ENCODE measurements at regions of chr17 and their contacts with region 1.

Region 1: GRCh38 chr17:32486111-32486700 is 587 bp upstream of the CDK5R1 start:
- DNase-seq: peak; percentile 55 to 82 (median 76)
- ATAC-seq: peak; percentile 87
- H3K4me3 ChIP-seq: no peak overlapping the region
- H3K4me3 Mint-ChIP-seq: peak overlapping the region; percentile 62 to 87 (median 80)
- H3K27ac ChIP-seq: peak overlapping the region; percentile 45
- H3K27ac Mint-ChIP-seq: peak overlapping the region in 8 of 9 donors; percentile 30 to 89 (median 84)
- H3K4me1 ChIP-seq: peaks cover 15 to 35% of the 10 kb centered on the region in 2 donors
- H3K4me1 Mint-ChIP-seq: peaks cover 15 to 53% (median 43%) of the 10 kb centered on the region in 7 donors
- H3K27me3 ChIP-seq: no peaks in the 10 kb centered on the region
- H3K27me3 Mint-ChIP-seq: no peaks in the 10 kb centered on the region

Region 2: DNA sequence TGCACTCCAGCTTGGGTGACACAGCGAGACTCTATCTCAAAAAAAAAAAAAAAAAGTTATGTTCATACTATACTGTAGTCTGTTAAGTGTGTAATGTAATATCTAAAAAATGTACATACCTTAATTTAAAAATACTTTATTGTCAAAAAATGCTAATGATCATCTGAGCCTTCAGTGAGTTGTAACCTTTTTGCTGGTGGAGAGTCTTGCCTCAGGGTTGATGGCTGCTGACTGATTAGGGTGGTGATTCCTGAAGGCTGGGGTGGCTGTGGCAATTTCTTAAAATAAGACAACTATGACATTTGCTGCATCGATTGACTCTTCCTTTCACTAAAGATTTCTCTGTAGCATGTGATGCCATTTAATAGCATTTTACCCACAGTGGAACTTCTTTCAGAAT is 320.1 kb before region 1 on chr17:
- CTCF ChIA-PET with region 1: no interaction called
- POLR2A ChIA-PET with region 1: no interaction called
- intact Hi-C with region 1: no loop called
- DNase-seq: no peak
- ATAC-seq: no peak
- H3K4me3 ChIP-seq: no peak overlapping the region
- H3K4me3 Mint-ChIP-seq: no peak overlapping the region
- H3K27ac ChIP-seq: no peak overlapping the region
- H3K27ac Mint-ChIP-seq: no peak overlapping the region
- H3K4me1 ChIP-seq: no peaks in the 10 kb centered on the region
- H3K4me1 Mint-ChIP-seq: peaks cover 0 to 5% (median 0%) of the 10 kb centered on the region in 7 donors
- H3K27me3 ChIP-seq: no peaks in the 10 kb centered on the region
- H3K27me3 Mint-ChIP-seq: no peaks in the 10 kb centered on the region

Region 3: GRCh38 chr17:32283745-32284201 is 202.4 kb before region 1 on chr17:
- CTCF ChIA-PET with region 1: no interaction called
- POLR2A ChIA-PET with region 1: no interaction called
- intact Hi-C with region 1: no loop called
- DNase-seq: no peak
- ATAC-seq: no peak
- H3K4me3 ChIP-seq: no peak overlapping the region
- H3K4me3 Mint-ChIP-seq: no peak overlapping the region
- H3K27ac ChIP-seq: no peak overlapping the region
- H3K27ac Mint-ChIP-seq: peak overlapping the region in 1 of 9 donors; percentile 70
- H3K4me1 ChIP-seq: no peaks in the 10 kb centered on the region
- H3K4me1 Mint-ChIP-seq: peaks cover 0 to 2% (median 0%) of the 10 kb centered on the region in 7 donors
- H3K27me3 ChIP-seq: no peaks in the 10 kb centered on the region
- H3K27me3 Mint-ChIP-seq: peaks cover 5 to 24% (median 10%) of the 10 kb centered on the region in 5 donors

Region 4: GRCh38 chr17:32444308-32445073 is 41.7 kb before region 1 on chr17 and contains the start of gene PSMD11:
- CTCF ChIA-PET with region 1: no interaction called
- POLR2A ChIA-PET with region 1: interaction called, 9 read pairs
- intact Hi-C with region 1: loop called in 1 of 2 experiments (anchors 1 kb)
- DNase-seq: peak; percentile 98 to 100 (median 99)
- ATAC-seq: peak; percentile 99
- H3K4me3 ChIP-seq: peak within 1 kb of the TSS; percentile 80
- H3K4me3 Mint-ChIP-seq: peak within 1 kb of the TSS; percentile 78 to 93 (median 86)
- H3K27ac ChIP-seq: peak within 1 kb of the TSS; percentile 94
- H3K27ac Mint-ChIP-seq: peak within 1 kb of the TSS; percentile 52 to 83 (median 78)
- H3K4me1 ChIP-seq: peaks cover 13 to 14% of the 10 kb centered on the region in 2 donors
- H3K4me1 Mint-ChIP-seq: peaks cover 25 to 46% (median 36%) of the 10 kb centered on the region in 7 donors
- H3K27me3 ChIP-seq: no peaks in the 10 kb centered on the region
- H3K27me3 Mint-ChIP-seq: peaks cover 0 to 23% (median 0%) of the 10 kb centered on the region in 5 donors
- total RNA-seq, gene PSMD11: 60.1 to 112 (median 67.5) TPM

Region 5: GRCh38 chr17:32470405-32471167 is 15.6 kb before region 1 on chr17:
- CTCF ChIA-PET with region 1: interaction called, 10 read pairs
- POLR2A ChIA-PET with region 1: interaction called, 6 read pairs
- intact Hi-C with region 1: no loop called
- DNase-seq: no peak
- ATAC-seq: no peak
- H3K4me3 ChIP-seq: no peak overlapping the region
- H3K4me3 Mint-ChIP-seq: no peak overlapping the region
- H3K27ac ChIP-seq: no peak overlapping the region
- H3K27ac Mint-ChIP-seq: no peak overlapping the region
- H3K4me1 ChIP-seq: no peaks in the 10 kb centered on the region
- H3K4me1 Mint-ChIP-seq: peaks cover 2 to 33% (median 17%) of the 10 kb centered on the region in 7 donors
- H3K27me3 ChIP-seq: no peaks in the 10 kb centered on the region
- H3K27me3 Mint-ChIP-seq: no peaks in the 10 kb centered on the region

Region 6: GRCh38 chr17:32519228-32520103 is 33.3 kb after region 1 on chr17:
- CTCF ChIA-PET with region 1: interaction called, 76 read pairs
- POLR2A ChIA-PET with region 1: interaction called, 382 read pairs
- intact Hi-C with region 1: loop called (anchors 1 kb)
- DNase-seq: peak; percentile 23 to 73 (median 46)
- ATAC-seq: peak; percentile 64
- H3K4me3 ChIP-seq: peak overlapping the region; percentile 50
- H3K4me3 Mint-ChIP-seq: peak overlapping the region; percentile 76 to 96 (median 88)
- H3K27ac ChIP-seq: peak overlapping the region; percentile 60
- H3K27ac Mint-ChIP-seq: peak overlapping the region; percentile 88 to 99 (median 93)
- H3K4me1 ChIP-seq: peaks cover 53 to 66% of the 10 kb centered on the region in 2 donors
- H3K4me1 Mint-ChIP-seq: peaks cover 40 to 83% (median 78%) of the 10 kb centered on the region in 7 donors
- H3K27me3 ChIP-seq: no peaks in the 10 kb centered on the region
- H3K27me3 Mint-ChIP-seq: no peaks in the 10 kb centered on the region

Region 7: GRCh38 chr17:32558997-32559650 is 72.9 kb after region 1 on chr17:
- CTCF ChIA-PET with region 1: interaction called, 9 read pairs
- POLR2A ChIA-PET with region 1: interaction called, 4 read pairs
- intact Hi-C with region 1: loop called (anchors 2 to 10 kb)
- DNase-seq: no peak
- ATAC-seq: peak; percentile 46
- H3K4me3 ChIP-seq: no peak overlapping the region
- H3K4me3 Mint-ChIP-seq: peak overlapping the region in 5 of 10 donors; percentile 65 to 84 (median 69)
- H3K27ac ChIP-seq: no peak overlapping the region
- H3K27ac Mint-ChIP-seq: peak overlapping the region in 6 of 9 donors; percentile 16 to 86 (median 66)
- H3K4me1 ChIP-seq: peaks cover 7% of the 10 kb centered on the region in 2 donors
- H3K4me1 Mint-ChIP-seq: peaks cover 0 to 38% (median 34%) of the 10 kb centered on the region in 7 donors
- H3K27me3 ChIP-seq: no peaks in the 10 kb centered on the region
- H3K27me3 Mint-ChIP-seq: no peaks in the 10 kb centered on the region

Region 8: GRCh38 chr17:32659419-32659842 is 173.2 kb after region 1 on chr17:
- CTCF ChIA-PET with region 1: interaction called, 6 read pairs
- POLR2A ChIA-PET with region 1: no interaction called
- intact Hi-C with region 1: loop called in 1 of 2 experiments (anchors 1 kb)
- DNase-seq: peak; percentile 21 to 64 (median 49)
- ATAC-seq: peak; percentile 81
- H3K4me3 ChIP-seq: no peak overlapping the region
- H3K4me3 Mint-ChIP-seq: no peak overlapping the region
- H3K27ac ChIP-seq: no peak overlapping the region
- H3K27ac Mint-ChIP-seq: no peak overlapping the region
- H3K4me1 ChIP-seq: no peaks in the 10 kb centered on the region
- H3K4me1 Mint-ChIP-seq: peaks cover 0 to 4% (median 0%) of the 10 kb centered on the region in 7 donors
- H3K27me3 ChIP-seq: no peaks in the 10 kb centered on the region
- H3K27me3 Mint-ChIP-seq: peaks cover 0 to 2% (median 0%) of the 10 kb centered on the region in 5 donors

Region 9: GRCh38 chr17:32684087-32684958 is 198.1 kb after region 1 on chr17:
- CTCF ChIA-PET with region 1: no interaction called
- POLR2A ChIA-PET with region 1: no interaction called
- intact Hi-C with region 1: no loop called
- DNase-seq: no peak
- ATAC-seq: no peak
- H3K4me3 ChIP-seq: no peak overlapping the region
- H3K4me3 Mint-ChIP-seq: no peak overlapping the region
- H3K27ac ChIP-seq: no peak overlapping the region
- H3K27ac Mint-ChIP-seq: no peak overlapping the region
- H3K4me1 ChIP-seq: no peaks in the 10 kb centered on the region
- H3K4me1 Mint-ChIP-seq: no peaks in the 10 kb centered on the region
- H3K27me3 ChIP-seq: no peaks in the 10 kb centered on the region
- H3K27me3 Mint-ChIP-seq: peaks cover 0 to 7% (median 5%) of the 10 kb centered on the region in 5 donors

Region 10: DNA sequence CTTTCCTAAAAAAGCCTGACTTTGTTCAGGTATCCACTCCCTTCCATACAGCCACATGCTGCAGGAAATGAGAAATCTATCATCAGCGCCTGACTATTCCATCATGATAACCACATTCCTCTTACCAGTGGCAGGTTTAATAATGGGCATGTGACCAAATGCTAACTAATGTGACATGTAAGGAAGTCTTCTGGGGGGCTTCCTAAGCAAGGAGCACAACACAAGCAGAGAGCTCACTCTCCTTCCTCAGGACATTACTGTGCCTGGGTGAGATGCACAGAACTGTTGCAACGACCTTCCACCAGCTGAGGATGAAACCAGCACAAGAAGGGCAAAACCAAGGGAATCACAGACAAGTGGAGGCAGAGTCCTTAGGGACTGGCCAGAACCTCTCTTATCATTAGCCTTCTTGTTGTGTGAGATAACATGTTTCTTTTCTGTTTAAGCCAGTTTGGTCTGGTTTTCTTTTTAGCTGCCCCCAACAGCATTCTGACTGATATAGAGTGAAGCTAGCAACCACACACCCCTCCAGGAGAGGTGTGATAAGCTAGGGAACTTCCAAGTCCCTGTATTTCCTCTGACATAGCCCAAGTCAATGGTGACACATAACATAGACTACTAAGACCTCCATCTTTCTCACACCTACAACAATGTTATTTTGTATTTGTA is 373.8 kb after region 1 on chr17:
- CTCF ChIA-PET with region 1: no interaction called
- POLR2A ChIA-PET with region 1: no interaction called
- intact Hi-C with region 1: no loop called
- DNase-seq: no peak
- ATAC-seq: peak; percentile 26
- H3K4me3 ChIP-seq: no peak overlapping the region
- H3K4me3 Mint-ChIP-seq: no peak overlapping the region
- H3K27ac ChIP-seq: no peak overlapping the region
- H3K27ac Mint-ChIP-seq: no peak overlapping the region
- H3K4me1 ChIP-seq: no peaks in the 10 kb centered on the region
- H3K4me1 Mint-ChIP-seq: peaks cover 0 to 2% (median 0%) of the 10 kb centered on the region in 7 donors
- H3K27me3 ChIP-seq: no peaks in the 10 kb centered on the region
- H3K27me3 Mint-ChIP-seq: peaks cover 4 to 16% (median 6%) of the 10 kb centered on the region in 5 donors

Region 11: DNA sequence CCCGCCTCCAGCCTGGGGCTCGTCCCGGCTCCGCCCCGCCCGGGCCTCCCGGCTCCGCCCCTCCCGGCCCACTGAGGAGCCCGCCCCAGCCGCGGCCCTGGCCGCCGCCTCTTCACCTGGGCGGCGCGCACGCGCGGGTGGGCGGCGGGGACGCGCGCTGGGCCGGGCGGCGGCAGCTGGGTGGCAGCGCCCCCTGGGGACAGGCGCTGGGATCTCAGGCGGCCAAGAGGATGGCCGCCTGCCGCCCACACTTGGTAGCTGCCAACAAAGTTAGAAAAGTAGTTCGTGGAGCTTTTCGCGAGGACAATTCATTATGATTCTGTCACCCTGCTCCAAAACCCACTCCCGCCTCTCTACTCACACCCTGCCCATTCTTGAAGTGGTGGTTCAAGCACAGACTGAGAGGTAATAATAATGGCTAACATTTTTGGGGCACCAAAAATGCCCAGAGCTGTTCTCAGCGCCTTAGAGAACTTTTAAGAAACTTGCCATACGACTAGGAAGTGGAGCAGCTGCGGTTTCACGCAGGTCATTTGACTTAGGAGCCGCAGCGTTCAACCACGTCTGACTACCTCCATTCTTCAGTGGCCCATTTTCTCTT is 391.1 kb after region 1 on chr17:
- CTCF ChIA-PET with region 1: no interaction called
- POLR2A ChIA-PET with region 1: interaction called, 4 read pairs
- intact Hi-C with region 1: loop called in 1 of 2 experiments (anchors 5 kb)
- DNase-seq: peak; percentile 87 to 99 (median 95)
- ATAC-seq: peak; percentile 98
- H3K4me3 ChIP-seq: peak overlapping the region; percentile 59
- H3K4me3 Mint-ChIP-seq: peak overlapping the region; percentile 72 to 88 (median 83)
- H3K27ac ChIP-seq: peak overlapping the region; percentile 66
- H3K27ac Mint-ChIP-seq: peak overlapping the region; percentile 56 to 94 (median 83)
- H3K4me1 ChIP-seq: peaks cover 0 to 8% of the 10 kb centered on the region in 2 donors
- H3K4me1 Mint-ChIP-seq: peaks cover 7 to 15% (median 11%) of the 10 kb centered on the region in 7 donors
- H3K27me3 ChIP-seq: peaks cover 0 to 4% of the 10 kb centered on the region in 2 donors
- H3K27me3 Mint-ChIP-seq: peaks cover 0 to 42% (median 7%) of the 10 kb centered on the region in 5 donors